ENCODE measurements at regions of chr3 and their contacts with region 1.

Region 1: GRCh38 chr3:13091898-13092611 is 18.8 kb upstream of the IQSEC1 start:
- DNase-seq: peak; percentile 89
- H3K4me3 Mint-ChIP-seq: no peak overlapping the region
- H3K27ac Mint-ChIP-seq: no peak overlapping the region
- H3K4me1 Mint-ChIP-seq: peaks cover 5% of the 10 kb centered on the region
- H3K27me3 Mint-ChIP-seq: no peaks in the 10 kb centered on the region

Region 2: DNA sequence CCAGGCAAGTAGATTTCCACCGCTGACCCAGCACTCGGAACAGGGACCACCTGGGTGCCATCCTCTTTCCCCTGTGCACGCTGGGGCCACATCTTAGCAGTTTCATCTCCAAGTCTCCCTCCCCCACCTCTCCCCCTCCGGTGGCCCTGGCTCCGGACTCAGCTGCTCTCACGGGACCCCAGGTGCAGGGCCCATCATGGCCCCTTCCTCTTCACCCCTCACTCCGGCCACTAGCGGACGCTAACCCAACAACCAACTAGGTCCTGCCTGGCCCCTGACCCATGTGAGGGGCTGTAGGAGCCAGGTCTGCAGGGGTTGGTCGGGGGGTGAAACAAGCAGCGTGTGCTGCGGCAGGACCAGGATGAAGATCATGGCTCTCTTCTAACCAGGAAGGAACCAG is 12.5 kb after region 1 on chr3:
- CTCF ChIA-PET with region 1: interaction called, 19 read pairs
- intact Hi-C with region 1: no loop called
- DNase-seq: no peak
- H3K4me3 Mint-ChIP-seq: no peak overlapping the region
- H3K27ac Mint-ChIP-seq: no peak overlapping the region
- H3K4me1 Mint-ChIP-seq: no peaks in the 10 kb centered on the region
- H3K27me3 Mint-ChIP-seq: no peaks in the 10 kb centered on the region

Region 3: DNA sequence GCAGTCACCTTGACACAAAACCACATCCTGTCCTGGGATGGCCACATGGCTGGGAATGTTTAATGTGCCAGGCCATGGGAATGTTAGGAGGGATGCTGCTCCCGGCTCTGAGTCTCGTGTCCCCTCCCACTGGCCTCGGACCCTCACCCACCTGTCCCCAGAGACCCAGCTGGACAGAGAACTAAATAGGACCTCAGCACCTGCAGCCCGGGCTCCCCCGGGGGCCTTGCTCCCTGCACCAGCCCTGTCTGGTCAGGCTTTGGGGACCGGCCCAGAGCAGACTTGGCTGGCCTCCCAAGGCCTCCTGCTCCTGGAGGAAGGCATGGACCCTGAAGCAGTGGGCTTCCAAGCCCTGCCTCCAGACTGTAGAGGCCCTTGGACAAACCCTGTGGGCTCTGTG is 81.1 kb after region 1 on chr3:
- CTCF ChIA-PET with region 1: no interaction called
- intact Hi-C with region 1: no loop called
- DNase-seq: no peak
- H3K4me3 Mint-ChIP-seq: no peak overlapping the region
- H3K27ac Mint-ChIP-seq: no peak overlapping the region
- H3K4me1 Mint-ChIP-seq: no peaks in the 10 kb centered on the region
- H3K27me3 Mint-ChIP-seq: no peaks in the 10 kb centered on the region

Region 4: GRCh38 chr3:13194285-13195209 is 102.5 kb after region 1 on chr3:
- CTCF ChIA-PET with region 1: interaction called, 7 read pairs
- intact Hi-C with region 1: loop called (anchors 5 kb)
- DNase-seq: no peak
- H3K4me3 Mint-ChIP-seq: no peak overlapping the region
- H3K27ac Mint-ChIP-seq: no peak overlapping the region
- H3K4me1 Mint-ChIP-seq: peaks cover 11% of the 10 kb centered on the region
- H3K27me3 Mint-ChIP-seq: peaks cover 1% of the 10 kb centered on the region

Region 5: DNA sequence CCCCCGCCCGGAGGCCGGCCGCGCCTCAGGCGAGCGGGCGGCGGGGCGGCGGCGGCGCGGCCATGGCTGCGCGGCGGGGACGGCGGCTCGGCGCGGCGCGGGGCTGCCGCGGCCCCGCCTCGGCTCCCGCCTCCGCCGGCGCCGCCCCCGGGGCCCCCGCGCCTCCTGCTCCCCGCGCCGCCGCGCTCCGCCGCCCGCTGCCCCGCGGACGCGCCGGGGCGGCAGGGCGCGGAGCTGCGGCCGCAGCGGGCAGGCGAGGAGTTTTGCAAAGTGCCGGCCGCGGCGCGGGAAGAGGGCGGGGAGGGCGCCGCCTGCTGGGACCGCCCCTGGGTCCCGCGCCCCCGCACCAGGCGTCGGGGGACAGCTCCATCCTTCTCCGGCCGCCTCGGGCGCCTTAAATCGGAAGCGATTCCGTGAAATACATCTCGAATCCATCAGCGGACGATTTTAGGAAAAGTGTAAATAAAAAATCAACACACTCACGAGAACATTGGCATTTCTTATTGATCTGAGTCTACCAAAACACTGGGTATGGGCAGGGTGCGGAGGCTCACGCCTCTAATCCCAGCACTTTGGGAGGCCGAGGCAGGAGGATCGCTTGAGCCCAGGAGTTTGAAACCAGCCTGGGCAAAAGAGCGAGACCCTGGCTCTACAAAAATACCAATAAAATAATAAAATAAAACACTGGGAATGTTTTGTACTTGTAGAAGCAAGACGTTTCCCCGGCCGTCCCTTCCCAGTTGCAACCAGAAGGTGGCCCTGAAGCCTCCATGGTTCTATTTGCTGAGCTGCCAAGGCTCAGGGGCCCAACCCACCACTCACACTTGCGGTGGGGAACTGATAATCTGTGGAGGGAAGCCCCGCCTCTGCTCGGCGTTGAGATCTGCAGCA is 191.2 kb after region 1 on chr3:
- CTCF ChIA-PET with region 1: interaction called, 10 read pairs
- intact Hi-C with region 1: loop called (anchors 1 kb)
- DNase-seq: peak; percentile 19
- H3K4me3 Mint-ChIP-seq: peak overlapping the region; percentile 64
- H3K27ac Mint-ChIP-seq: no peak overlapping the region
- H3K4me1 Mint-ChIP-seq: peaks cover 4% of the 10 kb centered on the region
- H3K27me3 Mint-ChIP-seq: peaks cover 43% of the 10 kb centered on the region

Region 6: GRCh38 chr3:13301286-13301987 is 209.4 kb after region 1 on chr3:
- CTCF ChIA-PET with region 1: no interaction called
- intact Hi-C with region 1: loop called (anchors 5 kb)
- DNase-seq: peak; percentile 61
- H3K4me3 Mint-ChIP-seq: no peak overlapping the region
- H3K27ac Mint-ChIP-seq: no peak overlapping the region
- H3K4me1 Mint-ChIP-seq: peaks cover 7% of the 10 kb centered on the region
- H3K27me3 Mint-ChIP-seq: peaks cover 7% of the 10 kb centered on the region

Region 7: GRCh38 chr3:13461169-13462158 is 369.4 kb after region 1 on chr3:
- CTCF ChIA-PET with region 1: interaction called, 20 read pairs
- intact Hi-C with region 1: loop called (anchors 1 kb)
- DNase-seq: peak; percentile 85
- H3K4me3 Mint-ChIP-seq: no peak overlapping the region
- H3K27ac Mint-ChIP-seq: no peak overlapping the region
- H3K4me1 Mint-ChIP-seq: peaks cover 3% of the 10 kb centered on the region
- H3K27me3 Mint-ChIP-seq: no peaks in the 10 kb centered on the region

Measured in activated naive CD4-positive, alpha-beta T cell treated with anti-CD3 and anti-CD28 coated beads for 36 hours (primary cell).